ENCODE measurements at regions of chr19 and their contacts with region 1.

Region 1: DNA sequence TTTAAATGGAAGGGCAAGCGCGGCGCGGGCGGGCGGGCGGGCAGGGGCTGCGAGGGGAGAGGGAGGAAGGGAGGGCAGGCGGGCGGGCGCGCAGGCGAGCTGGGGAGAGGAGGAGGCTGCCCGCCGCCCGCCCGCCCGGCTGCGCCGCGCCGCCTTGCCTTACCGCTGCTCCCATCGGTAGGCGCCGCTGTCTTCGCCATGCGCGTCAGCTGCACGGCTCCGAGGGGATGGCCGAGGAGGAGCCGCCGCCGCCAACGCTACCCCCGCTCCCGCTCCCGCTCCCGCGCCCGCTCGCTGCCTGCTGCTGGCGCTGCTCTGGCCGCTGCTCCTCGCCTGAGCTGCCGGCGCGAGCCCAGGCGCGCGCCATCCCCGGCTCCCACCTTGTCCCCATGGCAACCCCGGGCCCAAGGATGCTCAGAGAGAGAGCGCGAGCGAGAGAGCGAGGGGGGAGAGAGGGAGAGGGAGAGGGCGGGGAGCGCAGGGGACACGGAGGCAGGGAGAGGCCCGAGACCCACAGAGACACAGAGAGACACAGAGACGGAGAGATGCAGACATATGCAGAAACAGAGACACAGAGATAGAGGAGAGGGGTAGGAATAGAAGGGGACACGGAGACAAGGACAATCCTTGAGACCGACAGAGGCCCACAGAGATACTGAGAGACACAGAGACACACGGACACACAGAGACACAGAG is 40.3 kb downstream of the DEDD2 start:
- DNase-seq: peak; percentile 65 to 83 (median 72)
- H3K4me3 ChIP-seq: peak overlapping the region; percentile 17
- H3K4me3 Mint-ChIP-seq: peak overlapping the region in 2 of 7 donors; percentile 45 to 83
- H3K27ac ChIP-seq: no peak overlapping the region
- H3K27ac Mint-ChIP-seq: no peak overlapping the region
- H3K4me1 ChIP-seq: peaks cover 12% of the 10 kb centered on the region
- H3K4me1 Mint-ChIP-seq: peaks cover 10 to 18% (median 13%) of the 10 kb centered on the region in 3 donors
- H3K27me3 ChIP-seq: peaks cover 18% of the 10 kb centered on the region
- H3K27me3 Mint-ChIP-seq: peaks cover 7 to 23% of the 10 kb centered on the region in 2 donors

Region 2: GRCh38 chr19:42199440-42200115 is 22.4 kb after region 1 on chr19:
- CTCF ChIA-PET with region 1: interaction called, 10 read pairs
- POLR2A ChIA-PET with region 1: interaction called, 9 read pairs
- DNase-seq: peak in 4 of 5 donors; percentile 54 to 73 (median 56)
- H3K4me3 ChIP-seq: peak overlapping the region; percentile 61
- H3K4me3 Mint-ChIP-seq: peak overlapping the region; percentile 64 to 92 (median 86)
- H3K27ac ChIP-seq: peak overlapping the region; percentile 88
- H3K27ac Mint-ChIP-seq: peak overlapping the region; percentile 85 to 98 (median 97)
- H3K4me1 ChIP-seq: peaks cover 93% of the 10 kb centered on the region
- H3K4me1 Mint-ChIP-seq: peaks cover 78 to 85% (median 82%) of the 10 kb centered on the region in 3 donors
- H3K27me3 ChIP-seq: no peaks in the 10 kb centered on the region
- H3K27me3 Mint-ChIP-seq: peaks cover 0 to 1% of the 10 kb centered on the region in 2 donors